ENCODE measurements at regions of chr3 and their contacts with region 1.

Region 1: DNA sequence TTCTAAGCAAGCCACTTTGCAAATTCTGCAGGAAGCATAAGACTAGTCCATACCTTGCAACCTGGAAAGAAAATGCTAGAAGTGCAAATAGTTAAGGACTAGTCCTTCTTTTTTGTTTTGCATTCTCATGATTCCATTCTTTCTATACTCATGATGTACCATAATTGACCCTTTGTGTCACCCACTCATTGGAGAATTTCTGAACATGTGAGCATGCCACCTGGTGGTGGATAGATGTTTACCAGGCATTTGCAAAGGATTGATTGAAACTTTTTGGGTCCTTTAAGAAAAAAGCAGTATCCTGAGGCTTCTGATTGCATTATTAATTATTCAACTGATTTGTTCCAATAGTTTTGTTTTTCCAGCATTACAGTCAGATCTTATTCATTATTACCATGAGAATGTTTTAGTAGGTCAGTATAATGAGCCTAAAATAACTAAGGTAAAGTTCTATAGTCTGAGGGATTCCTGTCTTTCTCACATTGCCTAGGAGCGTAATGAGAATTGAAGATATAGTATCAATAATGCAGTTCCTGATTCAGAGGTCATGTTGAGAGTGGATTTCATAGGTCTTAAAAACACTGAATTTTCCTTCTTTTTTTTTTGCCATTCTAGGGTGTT is 20.2 kb upstream of the DIPK2A start:
- DNase-seq: no peak
- H3K4me3 ChIP-seq: no peak overlapping the region
- CTCF ChIP-seq: peak; percentile 52

Region 2: GRCh38 chr3:143885780-143886427 is 65.6 kb before region 1 on chr3:
- CTCF ChIA-PET with region 1: interaction called, 12 read pairs
- POLR2A ChIA-PET with region 1: no interaction called
- DNase-seq: no peak
- H3K4me3 ChIP-seq: no peak overlapping the region
- CTCF ChIP-seq: peak; percentile 61

Region 3: DNA sequence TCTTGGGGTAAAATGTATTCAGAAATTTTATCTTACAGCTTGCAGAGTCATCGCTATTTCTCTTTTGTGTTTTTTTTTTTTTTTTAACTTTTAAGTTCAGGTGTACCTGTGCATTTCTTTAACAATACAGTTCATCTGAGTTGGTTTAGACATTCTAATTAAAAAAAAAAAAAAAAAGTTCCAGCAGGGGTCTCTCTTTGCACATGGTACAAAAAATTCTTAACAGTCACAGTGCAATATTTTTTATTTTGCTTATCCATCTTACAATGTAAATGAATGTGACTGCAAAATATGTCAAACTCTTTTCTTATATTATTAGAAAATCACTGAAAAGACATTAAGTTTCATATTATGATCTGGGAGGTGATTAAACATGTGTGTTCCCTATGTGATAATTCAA is 55.7 kb before region 1 on chr3:
- CTCF ChIA-PET with region 1: interaction called, 17 read pairs
- POLR2A ChIA-PET with region 1: no interaction called
- DNase-seq: no peak
- H3K4me3 ChIP-seq: no peak overlapping the region
- CTCF ChIP-seq: no peak